Prostate gland (tissue), 2 donors: ENCODE measurements at regions of chr22 and their contacts with region 1.

Region 1: GRCh38 chr22:30634471-30635233 is 929 bp upstream of the SLC35E4 start:
- DNase-seq: peak; percentile 80
- H3K4me3 ChIP-seq: peak overlapping the region in 1 of 2 donors; percentile 53
- H3K27ac ChIP-seq: peak overlapping the region; percentile 79 to 82
- H3K4me1 ChIP-seq: peaks cover 14% of the 10 kb centered on the region
- H3K27me3 ChIP-seq: no peaks in the 10 kb centered on the region
- CTCF ChIP-seq: peak; percentile 90 to 98 (median 97)
- POLR2A ChIP-seq: no peak

Region 2: GRCh38 chr22:30754971-30755756 is 120.5 kb after region 1 on chr22:
- intact Hi-C with region 1: loop called (anchors 2 kb)
- DNase-seq: peak; percentile 38
- H3K4me3 ChIP-seq: no peak overlapping the region
- H3K27ac ChIP-seq: no peak overlapping the region
- H3K4me1 ChIP-seq: no peaks in the 10 kb centered on the region
- H3K27me3 ChIP-seq: no peaks in the 10 kb centered on the region
- CTCF ChIP-seq: peak; percentile 12 to 72 (median 64)
- POLR2A ChIP-seq: no peak